Lower leg skin (tissue), 4 donors: ENCODE measurements at regions of chr11 and their contacts with region 1.

Region 1: DNA sequence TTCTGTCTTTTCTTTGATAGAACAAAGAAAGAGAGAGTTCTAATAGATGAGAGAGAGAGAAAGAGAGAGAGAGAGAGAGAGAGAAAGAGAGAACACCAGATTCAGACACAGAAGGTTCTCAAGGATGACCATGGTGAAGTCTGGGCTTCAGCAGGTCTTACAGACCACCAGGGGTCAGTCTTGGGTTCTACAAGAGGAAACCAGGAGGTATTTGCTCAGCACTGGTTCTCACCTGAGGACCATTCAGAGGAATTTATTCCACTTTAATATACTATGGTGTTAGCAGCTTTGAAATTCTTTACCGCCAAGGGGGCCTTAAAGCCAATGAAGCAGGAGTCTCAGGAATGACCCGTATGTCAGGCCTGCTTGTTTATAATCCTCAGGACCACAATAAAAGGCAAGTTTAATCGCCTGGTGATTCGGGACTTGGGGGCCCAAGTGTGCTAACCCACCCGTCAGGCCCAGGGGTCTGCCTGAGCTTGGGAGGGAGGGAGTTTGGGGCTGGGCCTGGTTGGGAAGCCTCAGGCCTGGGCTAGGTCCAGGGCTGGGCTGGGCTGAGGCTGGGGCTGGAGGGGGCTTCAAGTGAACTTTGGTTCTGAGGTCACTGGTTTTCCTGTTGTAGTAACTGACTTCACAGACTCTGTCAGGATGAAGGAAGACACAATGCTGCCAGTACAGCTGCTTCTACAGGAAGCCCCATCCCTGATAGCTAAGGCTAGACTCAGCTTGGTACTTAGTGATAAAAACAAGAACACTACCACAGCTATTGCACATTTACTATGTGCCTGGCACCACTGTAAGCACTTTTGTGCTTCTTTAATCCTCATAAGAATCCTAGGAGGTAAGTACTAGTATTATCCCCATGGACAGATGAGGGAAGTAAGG is 179.2 kb upstream of the ZBED5 start:
- DNase-seq: peak in 1 of 2 donors; percentile 31
- H3K4me3 ChIP-seq: no peak overlapping the region
- CTCF ChIP-seq: peak in 1 of 3 donors; percentile 18
- POLR2A ChIP-seq: no peak

Region 2: DNA sequence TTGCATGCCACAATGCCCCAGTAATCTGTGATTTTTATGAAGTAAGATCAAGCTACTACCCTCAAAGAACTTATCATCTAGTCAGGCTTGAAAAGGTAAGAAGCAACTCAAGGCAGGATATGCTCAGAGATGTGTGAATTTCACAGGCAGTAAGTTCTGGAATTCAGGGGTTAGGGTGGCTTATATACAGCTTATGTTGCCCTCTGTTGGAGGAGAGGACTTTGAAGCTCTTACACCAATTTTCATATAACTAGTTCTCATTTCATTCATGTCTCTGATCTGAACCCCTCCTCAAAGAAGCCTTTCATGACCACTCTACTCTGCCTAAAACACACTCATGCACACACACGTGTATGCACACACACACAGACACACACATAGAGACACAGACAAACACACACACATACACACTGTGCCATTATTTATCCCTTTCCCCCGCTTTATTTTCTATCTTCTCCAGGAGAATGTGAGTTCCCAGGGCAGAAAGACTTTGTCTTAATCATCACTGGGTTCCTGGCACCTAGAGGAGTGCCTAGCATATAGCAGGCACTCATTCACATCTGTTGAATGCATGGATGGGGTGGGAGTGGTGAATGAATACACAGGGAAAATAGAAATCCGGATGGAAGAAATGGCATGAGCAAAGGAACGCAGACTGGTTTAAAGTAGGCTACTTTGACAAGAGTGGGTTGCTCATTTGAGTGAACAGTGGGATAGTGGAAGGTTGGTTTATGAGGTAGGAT is 41.4 kb after region 1 on chr11:
- intact Hi-C with region 1: no loop called
- DNase-seq: no peak
- H3K4me3 ChIP-seq: no peak overlapping the region
- CTCF ChIP-seq: no peak
- POLR2A ChIP-seq: no peak

Region 3: DNA sequence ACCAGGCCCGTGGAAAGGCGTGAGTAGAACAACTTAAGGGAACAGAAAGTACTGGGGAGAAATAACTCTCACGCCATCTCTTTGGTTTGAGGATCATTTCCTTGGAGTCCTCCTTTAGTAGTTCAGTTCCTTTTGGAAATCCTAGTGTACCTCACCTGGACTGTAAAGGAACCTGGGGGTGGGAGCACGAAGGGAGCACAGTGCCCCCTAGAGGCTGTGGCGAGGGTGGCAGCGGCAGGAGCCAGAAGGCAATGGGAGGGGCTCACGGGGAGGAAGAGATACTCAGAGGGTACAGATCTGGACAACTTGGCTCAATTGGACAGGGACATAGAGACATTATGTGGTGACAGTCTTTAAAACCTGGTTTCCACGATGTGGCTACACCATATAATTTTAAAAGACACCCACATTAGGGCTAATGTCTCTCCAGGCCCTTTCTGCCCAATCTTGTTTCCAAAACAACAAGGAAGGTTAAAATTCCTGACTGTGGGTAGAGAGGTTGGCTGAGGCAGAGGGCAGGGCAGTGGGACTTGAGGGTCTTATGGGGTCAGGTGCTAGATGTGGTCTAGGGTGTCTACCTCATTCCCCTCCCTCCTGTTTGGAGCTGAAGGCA is 229.0 kb after region 1 on chr11:
- intact Hi-C with region 1: loop called (anchors 10 kb)
- DNase-seq: peak in 1 of 2 donors; percentile 85
- H3K4me3 ChIP-seq: no peak overlapping the region
- CTCF ChIP-seq: no peak
- POLR2A ChIP-seq: no peak

Region 4: GRCh38 chr11:11313426-11313825 is 276.3 kb after region 1 on chr11:
- intact Hi-C with region 1: no loop called
- DNase-seq: no peak
- H3K4me3 ChIP-seq: no peak overlapping the region
- CTCF ChIP-seq: no peak
- POLR2A ChIP-seq: no peak

Region 5: DNA sequence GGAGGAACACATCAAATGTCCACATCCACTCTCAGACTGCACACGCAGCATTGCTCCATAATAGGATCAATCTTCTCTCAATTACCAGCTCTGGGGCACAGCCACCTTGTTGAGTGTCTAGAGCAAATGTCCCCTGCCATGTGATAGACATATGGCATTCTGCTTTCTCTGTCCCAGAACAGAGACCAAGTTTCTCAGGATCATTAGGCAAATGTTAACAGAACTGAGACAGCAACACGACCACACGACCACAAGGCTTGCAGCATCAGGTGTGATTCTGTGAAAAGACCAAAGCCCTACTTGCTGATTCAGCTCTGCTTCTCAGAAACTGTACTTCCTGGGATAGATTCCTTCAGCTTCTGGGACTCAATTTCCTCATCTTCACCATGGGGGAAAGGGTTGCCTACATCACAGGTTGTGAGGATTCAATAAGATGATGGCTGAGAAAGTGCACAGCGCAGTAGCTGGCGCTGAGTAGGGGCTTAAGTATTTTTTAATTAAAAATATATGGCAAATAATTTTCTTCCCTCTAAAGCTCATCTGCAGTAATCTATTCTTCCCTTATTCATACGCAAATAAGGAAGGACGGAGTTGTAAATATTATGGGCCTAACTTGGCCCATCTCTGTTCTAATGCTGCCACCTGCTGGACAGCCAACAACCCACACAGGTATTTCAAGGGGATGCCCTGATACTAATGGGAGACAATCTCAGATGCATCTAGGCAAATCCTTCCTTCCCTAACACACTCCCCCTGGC is 750.4 kb after region 1 on chr11:
- intact Hi-C with region 1: loop called (anchors 10 kb)
- DNase-seq: peak; percentile 69 to 93
- H3K4me3 ChIP-seq: no peak overlapping the region
- CTCF ChIP-seq: no peak
- POLR2A ChIP-seq: no peak